CD14-positive monocyte (primary cell): ENCODE measurements at regions of chr16 and their contacts with region 1.

Region 1: GRCh38 chr16:11715246-11715947 is 27.3 kb downstream of the TXNDC11 start:
- DNase-seq: no peak
- H3K4me3 ChIP-seq: no peak overlapping the region
- H3K4me3 Mint-ChIP-seq: no peak overlapping the region
- H3K27ac ChIP-seq: no peak overlapping the region
- H3K27ac Mint-ChIP-seq: peak overlapping the region in 3 of 7 donors; percentile 15 to 69 (median 57)
- H3K4me1 ChIP-seq: no peaks in the 10 kb centered on the region
- H3K4me1 Mint-ChIP-seq: peaks cover 3% of the 10 kb centered on the region
- H3K27me3 ChIP-seq: no peaks in the 10 kb centered on the region
- H3K27me3 Mint-ChIP-seq: peaks cover 0 to 2% (median 0%) of the 10 kb centered on the region in 3 donors
- CTCF ChIP-seq: no peak

Region 2: GRCh38 chr16:10964039-10964890 is 751.1 kb before region 1 on chr16:
- intact Hi-C with region 1: loop called in 1 of 2 experiments (anchors 10 kb)
- DNase-seq: peak; percentile 71 to 75 (median 72)
- H3K4me3 ChIP-seq: no peak overlapping the region
- H3K4me3 Mint-ChIP-seq: no peak overlapping the region
- H3K27ac ChIP-seq: no peak overlapping the region
- H3K27ac Mint-ChIP-seq: peak overlapping the region in 2 of 7 donors; percentile 46 to 59
- H3K4me1 ChIP-seq: peaks cover under 1 to 2% of the 10 kb centered on the region in 2 donors
- H3K4me1 Mint-ChIP-seq: peaks cover 17% of the 10 kb centered on the region
- H3K27me3 ChIP-seq: no peaks in the 10 kb centered on the region
- H3K27me3 Mint-ChIP-seq: peaks cover 0 to 3% (median 0%) of the 10 kb centered on the region in 3 donors
- CTCF ChIP-seq: peak; percentile 94

Region 3: DNA sequence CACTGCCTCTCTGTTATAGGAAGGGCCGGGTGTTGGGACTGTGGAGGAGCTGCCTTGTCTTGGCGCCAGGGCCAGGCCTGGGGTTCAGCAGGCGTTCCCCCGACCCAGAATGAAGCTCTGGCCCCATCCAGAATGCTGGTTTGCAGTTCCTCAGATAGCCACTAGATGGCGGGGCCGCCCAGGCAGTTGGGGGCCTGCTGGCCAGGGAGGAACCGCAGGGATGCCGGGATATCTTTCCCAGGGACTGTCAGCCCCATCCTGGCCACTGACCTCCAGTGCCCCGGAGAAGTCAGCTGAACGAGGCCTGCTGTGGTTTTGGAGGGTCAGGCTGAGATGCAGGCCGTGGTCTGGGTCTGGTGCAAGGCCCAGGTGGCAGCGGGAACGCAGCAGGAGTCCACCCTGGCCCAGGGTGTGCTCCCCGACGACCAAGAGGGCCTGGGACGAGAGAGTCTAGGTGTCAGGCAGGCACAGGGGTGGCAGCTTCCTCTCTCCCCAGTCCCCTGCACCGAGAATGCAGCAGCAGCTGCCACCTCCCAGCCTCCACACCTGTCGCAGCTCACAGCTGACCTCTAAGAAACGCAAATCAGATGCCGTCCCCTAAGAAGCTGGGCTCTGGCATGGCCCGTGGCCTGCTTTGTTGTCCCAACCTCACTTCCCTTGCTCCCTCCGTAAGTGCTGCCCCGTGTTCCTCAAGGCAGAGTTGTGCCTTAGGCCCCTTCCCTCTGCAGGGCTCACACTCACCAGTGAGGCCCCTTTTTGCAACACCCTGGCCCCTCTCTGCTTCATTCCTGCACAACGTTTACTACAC is 319.0 kb before region 1 on chr16:
- intact Hi-C with region 1: loop called (anchors 5 kb)
- DNase-seq: peak; percentile 38 to 62 (median 58)
- H3K4me3 ChIP-seq: no peak overlapping the region
- H3K4me3 Mint-ChIP-seq: no peak overlapping the region
- H3K27ac ChIP-seq: no peak overlapping the region
- H3K27ac Mint-ChIP-seq: peak overlapping the region in 2 of 7 donors; percentile 24 to 68
- H3K4me1 ChIP-seq: no peaks in the 10 kb centered on the region
- H3K4me1 Mint-ChIP-seq: no peaks in the 10 kb centered on the region
- H3K27me3 ChIP-seq: no peaks in the 10 kb centered on the region
- H3K27me3 Mint-ChIP-seq: peaks cover 3 to 10% (median 5%) of the 10 kb centered on the region in 3 donors
- CTCF ChIP-seq: peak; percentile 100

Region 4: DNA sequence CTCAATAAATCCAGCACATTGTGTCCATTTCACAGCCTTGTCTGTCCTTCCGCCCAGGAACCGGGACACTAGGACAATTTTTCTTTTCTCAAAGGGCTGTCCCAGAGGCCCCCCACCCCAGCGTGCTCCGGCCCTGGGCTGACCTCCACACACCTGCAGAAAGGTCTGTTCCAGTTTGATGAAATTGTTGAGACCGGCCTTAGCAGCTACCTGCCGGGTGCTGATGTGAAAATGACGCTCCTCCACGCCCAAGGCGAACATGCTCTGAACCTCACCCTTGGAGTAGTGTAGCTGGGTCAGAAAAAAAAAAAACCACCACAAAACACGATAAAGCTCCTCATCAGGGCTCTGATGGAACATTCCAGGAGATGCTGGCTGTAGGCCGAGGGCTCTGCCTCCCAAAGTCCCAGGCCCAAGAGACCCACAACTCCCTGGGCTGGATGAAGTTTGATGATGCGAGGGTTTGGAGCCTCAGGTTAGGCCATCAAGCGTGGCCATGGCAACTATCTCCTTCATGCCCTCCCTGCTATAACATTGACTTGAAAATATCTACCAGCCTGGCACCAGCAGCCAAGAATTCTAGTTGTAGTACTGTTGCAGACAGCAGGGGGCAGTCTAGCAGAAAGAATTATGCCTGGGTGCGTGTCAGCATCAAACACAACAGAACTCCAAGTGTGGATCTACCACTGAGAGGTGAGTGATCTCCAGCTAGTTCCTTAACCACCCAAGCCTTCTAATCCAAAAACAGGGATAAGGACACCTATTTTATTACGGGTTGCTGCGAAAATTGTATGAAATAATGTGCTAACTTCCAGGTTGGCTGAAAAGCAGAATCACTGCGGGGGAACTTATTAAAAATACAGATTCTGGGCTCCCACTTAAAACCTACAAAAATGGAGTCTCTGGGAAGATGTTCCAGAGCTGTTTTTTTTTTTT is 308.1 kb before region 1 on chr16:
- intact Hi-C with region 1: loop called in 1 of 2 experiments (anchors 5 kb)
- DNase-seq: peak; percentile 63 to 72 (median 65)
- H3K4me3 ChIP-seq: no peak overlapping the region
- H3K4me3 Mint-ChIP-seq: no peak overlapping the region
- H3K27ac ChIP-seq: no peak overlapping the region
- H3K27ac Mint-ChIP-seq: peak overlapping the region in 1 of 7 donors; percentile 18
- H3K4me1 ChIP-seq: peaks cover 17 to 23% of the 10 kb centered on the region in 2 donors
- H3K4me1 Mint-ChIP-seq: peaks cover 19% of the 10 kb centered on the region
- H3K27me3 ChIP-seq: no peaks in the 10 kb centered on the region
- H3K27me3 Mint-ChIP-seq: peaks cover 1 to 7% (median 5%) of the 10 kb centered on the region in 3 donors
- CTCF ChIP-seq: peak; percentile 85

Region 5: DNA sequence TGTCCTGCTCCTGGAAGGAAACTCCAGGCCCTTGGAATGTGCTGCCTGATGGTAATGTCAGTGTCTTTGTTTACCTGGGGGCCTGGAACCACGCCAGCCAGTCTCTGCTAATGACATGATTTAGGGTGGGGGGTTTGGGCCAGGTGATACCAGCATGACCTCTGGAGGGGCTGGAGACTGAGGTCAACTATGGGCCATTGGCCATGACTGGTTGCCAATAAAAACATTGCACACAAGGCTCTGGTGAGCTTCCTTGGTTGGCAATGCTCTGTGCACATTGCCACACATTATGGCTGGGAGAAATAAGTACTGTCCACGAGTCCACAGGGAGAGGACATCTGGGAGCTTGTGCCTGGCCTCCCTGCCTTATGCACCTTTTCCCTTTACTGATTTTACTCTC is 181.1 kb before region 1 on chr16:
- intact Hi-C with region 1: loop called (anchors 2 to 5 kb)
- DNase-seq: no peak
- H3K4me3 ChIP-seq: no peak overlapping the region
- H3K4me3 Mint-ChIP-seq: no peak overlapping the region
- H3K27ac ChIP-seq: no peak overlapping the region
- H3K27ac Mint-ChIP-seq: peak overlapping the region in 1 of 7 donors; percentile 71
- H3K4me1 ChIP-seq: peaks cover 15 to 22% of the 10 kb centered on the region in 2 donors
- H3K4me1 Mint-ChIP-seq: peaks cover 27% of the 10 kb centered on the region
- H3K27me3 ChIP-seq: no peaks in the 10 kb centered on the region
- H3K27me3 Mint-ChIP-seq: peaks cover 5 to 10% (median 6%) of the 10 kb centered on the region in 3 donors
- CTCF ChIP-seq: no peak

Region 6: DNA sequence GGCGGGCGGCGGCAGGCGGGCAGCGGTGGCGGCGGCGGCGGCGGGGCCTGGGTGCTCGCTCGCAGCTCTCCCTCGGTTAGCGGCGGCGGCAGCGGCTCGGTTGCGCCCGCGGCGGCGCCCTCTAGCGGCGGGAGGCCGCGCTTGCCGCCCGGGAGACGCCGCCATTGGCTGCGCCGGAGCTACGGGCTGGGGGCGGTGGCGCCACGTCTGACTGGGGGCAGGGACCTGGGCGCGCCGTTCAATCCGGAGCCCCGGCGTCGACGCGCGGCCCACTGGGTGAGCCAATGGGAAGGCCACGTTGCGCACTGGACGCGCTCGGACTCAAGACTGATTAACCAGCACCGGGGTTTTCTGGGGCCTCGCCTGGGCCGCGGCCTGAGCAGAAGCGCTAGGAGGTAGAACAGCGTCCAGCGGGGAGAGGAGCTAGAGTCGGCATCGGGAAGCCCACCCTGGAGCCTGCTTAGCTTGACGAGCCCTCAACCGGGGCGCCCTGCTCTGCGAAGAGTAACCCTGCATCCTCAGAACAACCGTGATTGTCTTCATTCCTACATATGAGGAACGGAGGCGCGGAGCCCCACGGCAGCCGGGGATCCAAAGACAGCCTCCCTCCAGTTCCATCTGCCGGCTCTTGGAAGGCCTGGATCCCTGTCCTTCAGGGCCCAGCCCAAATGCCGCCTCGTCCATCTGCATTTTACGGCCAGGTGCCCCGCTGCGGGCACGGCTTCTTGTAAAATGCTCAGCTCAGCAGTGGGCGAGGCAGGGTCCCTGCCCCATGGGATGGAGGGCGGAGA is 82.0 kb after region 1 on chr16 and contains the start of gene ZC3H7A:
- intact Hi-C with region 1: no loop called
- DNase-seq: peak; percentile 95 to 98 (median 97)
- H3K4me3 ChIP-seq: peak within 1 kb of the TSS; percentile 78 to 99 (median 98)
- H3K4me3 Mint-ChIP-seq: peak within 1 kb of the TSS; percentile 92 to 99
- H3K27ac ChIP-seq: peak within 1 kb of the TSS; percentile 99 to 100
- H3K27ac Mint-ChIP-seq: peak within 1 kb of the TSS; percentile 97 to 99 (median 98)
- H3K4me1 ChIP-seq: peaks cover 55 to 73% of the 10 kb centered on the region in 2 donors
- H3K4me1 Mint-ChIP-seq: peaks cover 72% of the 10 kb centered on the region
- H3K27me3 ChIP-seq: no peaks in the 10 kb centered on the region
- H3K27me3 Mint-ChIP-seq: peaks cover 0 to 4% (median 1%) of the 10 kb centered on the region in 3 donors
- CTCF ChIP-seq: peak; percentile 78
- polyA plus RNA-seq, gene ZC3H7A: 22.6 to 62.0 (median 27.5) TPM